B cell (primary cell): ENCODE measurements at regions of chr6 and their contacts with region 1.

Region 1: DNA sequence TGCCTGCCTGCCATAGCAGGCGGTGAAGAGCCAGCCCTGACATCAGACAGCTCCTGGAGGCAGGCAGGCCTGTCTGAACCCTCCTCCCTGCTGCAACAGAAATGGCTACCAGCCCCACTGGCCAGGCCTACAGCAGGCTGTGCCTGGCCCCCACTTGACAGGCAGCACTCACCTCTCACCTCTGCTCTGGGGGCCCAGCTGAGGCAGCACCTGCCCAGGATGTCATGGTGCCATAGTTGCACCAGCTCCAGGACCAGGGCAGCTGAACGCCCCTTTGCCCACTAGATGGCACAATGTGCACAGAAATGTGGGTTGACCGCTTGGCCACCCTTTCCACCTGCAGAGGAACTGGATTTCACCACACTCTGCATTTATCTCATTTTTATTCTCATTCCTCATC is 30.6 kb downstream of the MRPL14 start:
- DNase-seq: peak; percentile 84
- ATAC-seq: peak; percentile 89
- H3K4me3 ChIP-seq: no peak overlapping the region
- H3K4me3 Mint-ChIP-seq: no peak overlapping the region
- H3K27ac ChIP-seq: no peak overlapping the region
- H3K27ac Mint-ChIP-seq: no peak overlapping the region
- H3K4me1 ChIP-seq: no peaks in the 10 kb centered on the region
- H3K4me1 Mint-ChIP-seq: no peaks in the 10 kb centered on the region
- H3K27me3 ChIP-seq: no peaks in the 10 kb centered on the region
- H3K27me3 Mint-ChIP-seq: no peaks in the 10 kb centered on the region
- CTCF ChIP-seq: peak; percentile 79

Region 2: DNA sequence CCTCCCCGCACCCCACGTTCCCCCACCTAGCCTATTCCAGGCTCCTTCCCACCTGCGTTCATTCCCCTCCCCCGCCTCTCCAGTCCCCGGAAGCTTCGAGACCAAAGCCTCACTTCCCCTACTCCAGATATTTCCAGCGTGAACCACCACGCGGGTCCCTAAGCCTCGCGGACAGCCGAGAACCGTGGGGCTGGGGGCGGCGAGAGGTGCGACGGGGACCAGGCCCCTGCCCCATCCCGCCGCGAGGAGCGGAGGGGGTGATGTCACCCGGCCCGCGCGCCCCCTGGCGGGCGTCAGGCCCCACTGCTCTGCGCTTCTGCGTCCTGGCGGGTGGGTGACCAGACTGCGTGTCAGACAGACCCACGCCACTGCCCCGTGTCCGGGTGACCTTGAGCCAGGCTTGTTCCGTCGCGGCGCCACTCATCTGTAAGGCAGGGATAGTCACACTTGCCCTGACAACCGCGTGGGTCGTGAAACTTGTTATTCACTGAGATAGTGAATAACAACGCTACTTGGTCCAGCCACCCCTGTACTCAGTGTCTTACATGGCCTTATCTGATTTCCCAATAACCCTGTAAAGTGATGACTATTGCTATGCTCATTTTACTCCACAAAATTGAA is 141.3 kb after region 1 on chr6:
- CTCF ChIA-PET with region 1: interaction called, 33 read pairs
- POLR2A ChIA-PET with region 1: no interaction called
- intact Hi-C with region 1: loop called (anchors 1 kb)
- DNase-seq: peak; percentile 87
- ATAC-seq: peak; percentile 93
- H3K4me3 ChIP-seq: peak overlapping the region; percentile 28 to 85 (median 79)
- H3K4me3 Mint-ChIP-seq: peak overlapping the region; percentile 95
- H3K27ac ChIP-seq: peak overlapping the region; percentile 90 to 91
- H3K27ac Mint-ChIP-seq: peak overlapping the region; percentile 96
- H3K4me1 ChIP-seq: peaks cover 6 to 14% of the 10 kb centered on the region in 2 donors
- H3K4me1 Mint-ChIP-seq: peaks cover 15% of the 10 kb centered on the region
- H3K27me3 ChIP-seq: no peaks in the 10 kb centered on the region
- H3K27me3 Mint-ChIP-seq: no peaks in the 10 kb centered on the region
- CTCF ChIP-seq: peak; percentile 97

Region 3: DNA sequence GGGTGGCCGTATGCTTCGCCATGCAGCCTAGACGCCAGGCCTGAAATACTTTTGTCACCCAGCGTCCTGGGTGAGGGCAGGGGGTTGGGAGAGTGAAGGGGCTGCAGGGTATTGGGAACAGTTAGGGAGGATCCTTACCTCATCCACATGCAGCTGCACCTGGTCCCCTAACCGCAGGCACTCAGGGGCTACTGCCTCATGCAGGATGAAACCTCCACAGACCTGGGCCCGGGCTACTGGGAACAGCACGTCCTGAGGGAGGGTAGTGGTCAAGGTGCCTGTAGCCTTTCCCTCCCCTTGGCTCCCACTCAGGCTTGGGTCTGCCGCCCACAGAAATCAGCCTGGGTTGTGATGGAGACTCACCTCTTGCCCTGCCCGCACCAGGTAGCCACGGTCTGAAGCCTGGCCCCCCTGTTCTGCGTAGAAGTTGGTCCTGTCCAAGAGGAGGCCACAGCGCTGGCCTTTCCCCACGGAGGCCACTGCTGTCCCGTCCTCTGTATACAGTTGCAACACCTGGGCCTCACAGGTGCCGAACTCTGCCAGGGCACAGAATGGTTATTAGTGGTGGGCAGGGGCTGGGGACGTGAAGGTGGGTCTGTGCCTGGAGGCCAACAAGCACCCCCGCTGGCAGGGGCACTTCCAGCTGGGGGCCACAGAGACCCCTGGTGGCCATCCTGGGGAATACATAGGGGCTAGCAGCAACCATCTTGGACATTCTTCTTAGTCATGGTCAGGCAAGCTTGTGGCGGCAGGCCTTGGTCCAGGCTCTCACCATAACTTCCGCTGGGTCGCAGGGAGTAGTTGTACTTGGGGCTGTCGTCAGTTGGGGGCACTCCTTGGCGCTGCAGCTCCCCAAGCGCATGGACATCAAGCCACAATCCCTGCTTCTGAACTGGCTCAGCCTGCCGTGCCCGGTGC is 207.9 kb after region 1 on chr6:
- CTCF ChIA-PET with region 1: interaction called, 5 read pairs
- POLR2A ChIA-PET with region 1: interaction called, 4 read pairs
- intact Hi-C with region 1: loop called (anchors 1 kb)
- DNase-seq: peak; percentile 70
- ATAC-seq: peak; percentile 89
- H3K4me3 ChIP-seq: no peak overlapping the region
- H3K4me3 Mint-ChIP-seq: no peak overlapping the region
- H3K27ac ChIP-seq: no peak overlapping the region
- H3K27ac Mint-ChIP-seq: no peak overlapping the region
- H3K4me1 ChIP-seq: no peaks in the 10 kb centered on the region
- H3K4me1 Mint-ChIP-seq: no peaks in the 10 kb centered on the region
- H3K27me3 ChIP-seq: no peaks in the 10 kb centered on the region
- H3K27me3 Mint-ChIP-seq: no peaks in the 10 kb centered on the region
- CTCF ChIP-seq: peak; percentile 84

Region 4: GRCh38 chr6:44338228-44339122 is 241.9 kb after region 1 on chr6:
- CTCF ChIA-PET with region 1: interaction called, 57 read pairs
- POLR2A ChIA-PET with region 1: no interaction called
- intact Hi-C with region 1: loop called (anchors 1 kb)
- DNase-seq: peak; percentile 80
- ATAC-seq: peak; percentile 83
- H3K4me3 ChIP-seq: no peak overlapping the region
- H3K4me3 Mint-ChIP-seq: no peak overlapping the region
- H3K27ac ChIP-seq: no peak overlapping the region
- H3K27ac Mint-ChIP-seq: no peak overlapping the region
- H3K4me1 ChIP-seq: peaks cover 0 to 6% of the 10 kb centered on the region in 2 donors
- H3K4me1 Mint-ChIP-seq: no peaks in the 10 kb centered on the region
- H3K27me3 ChIP-seq: peaks cover 0 to 22% (median 19%) of the 10 kb centered on the region in 4 experiments
- H3K27me3 Mint-ChIP-seq: peaks cover 24% of the 10 kb centered on the region
- CTCF ChIP-seq: peak; percentile 82